SK-N-SH (cell line): ENCODE measurements at regions of chr18 and their contacts with region 1.

Region 1: GRCh38 chr18:12726774-12727550 is 24.1 kb downstream of the PSMG2 start:
- DNase-seq: peak; percentile 69
- H3K4me3 ChIP-seq: no peak overlapping the region; a peak in 1 of 4 replicates
- H3K27ac ChIP-seq: no peak overlapping the region
- H3K4me1 ChIP-seq: no peaks in the 10 kb centered on the region; a peak in 1 of 4 replicates
- H3K27me3 ChIP-seq: no peaks in the 10 kb centered on the region
- CTCF ChIP-seq: peak; percentile 89
- EP300 ChIP-seq: no peak
- RAD21 ChIP-seq: peak; percentile 89

Region 2: GRCh38 chr18:12106471-12106870 is 620.5 kb before region 1 on chr18:
- CTCF ChIA-PET with region 1: no interaction called
- POLR2A ChIA-PET with region 1: no interaction called
- DNase-seq: no peak
- H3K4me3 ChIP-seq: no peak overlapping the region
- H3K27ac ChIP-seq: no peak overlapping the region
- H3K4me1 ChIP-seq: no peaks in the 10 kb centered on the region; a peak in 1 of 4 replicates
- H3K27me3 ChIP-seq: no peaks in the 10 kb centered on the region; the same call in 1 of the 2 replicates
- CTCF ChIP-seq: no peak
- EP300 ChIP-seq: no peak
- RAD21 ChIP-seq: no peak

Region 3: DNA sequence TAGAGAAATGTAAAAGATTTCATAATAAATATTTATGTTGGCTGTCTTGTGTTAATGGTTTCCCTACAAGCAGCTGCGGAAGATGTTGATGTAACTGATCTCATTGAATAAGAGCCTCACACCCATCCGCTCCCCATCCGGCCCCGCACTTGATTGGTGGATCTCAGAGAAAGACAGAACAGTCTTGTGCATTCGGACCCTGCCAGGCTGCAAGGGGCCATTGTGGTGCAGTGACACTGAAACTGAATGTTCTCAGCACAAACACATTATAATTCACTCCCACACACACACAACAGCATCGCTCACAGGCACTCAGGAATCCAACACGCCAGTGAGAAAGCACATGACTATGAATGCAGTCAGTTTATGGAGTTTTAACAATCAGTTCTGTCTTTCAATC is 271.5 kb before region 1 on chr18:
- CTCF ChIA-PET with region 1: no interaction called
- POLR2A ChIA-PET with region 1: no interaction called
- DNase-seq: no peak
- H3K4me3 ChIP-seq: no peak overlapping the region
- H3K27ac ChIP-seq: no peak overlapping the region
- H3K4me1 ChIP-seq: peaks cover 0 to 3% of the 10 kb centered on the region in 2 experiments; a peak in 1 of 4 replicates
- H3K27me3 ChIP-seq: no peaks in the 10 kb centered on the region
- CTCF ChIP-seq: no peak
- EP300 ChIP-seq: no peak
- RAD21 ChIP-seq: no peak

Region 4: DNA sequence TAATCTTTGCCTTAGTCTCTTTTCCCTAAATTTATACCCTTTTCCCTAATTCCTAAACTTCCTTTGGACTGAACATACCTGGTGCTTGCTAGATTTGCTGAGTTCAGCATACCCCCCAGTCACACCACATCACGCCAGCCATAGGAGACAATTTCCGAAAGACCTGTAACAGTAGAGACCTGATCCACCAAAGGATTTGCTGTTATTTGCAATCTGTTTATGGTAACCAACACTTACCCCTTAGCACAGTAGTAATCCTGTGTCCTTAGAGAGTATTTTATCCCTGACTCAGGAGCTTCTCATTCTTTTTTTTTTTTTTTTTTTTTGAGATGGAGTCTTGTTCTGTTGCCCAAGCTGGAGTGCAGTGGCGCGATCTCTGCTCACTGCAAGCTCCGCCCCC is 15.5 kb before region 1 on chr18:
- CTCF ChIA-PET with region 1: interaction called, 10 read pairs
- POLR2A ChIA-PET with region 1: no interaction called
- DNase-seq: no peak
- H3K4me3 ChIP-seq: no peak overlapping the region
- H3K27ac ChIP-seq: no peak overlapping the region
- H3K4me1 ChIP-seq: no peaks in the 10 kb centered on the region
- H3K27me3 ChIP-seq: no peaks in the 10 kb centered on the region
- CTCF ChIP-seq: no peak
- EP300 ChIP-seq: no peak
- RAD21 ChIP-seq: no peak

Region 5: DNA sequence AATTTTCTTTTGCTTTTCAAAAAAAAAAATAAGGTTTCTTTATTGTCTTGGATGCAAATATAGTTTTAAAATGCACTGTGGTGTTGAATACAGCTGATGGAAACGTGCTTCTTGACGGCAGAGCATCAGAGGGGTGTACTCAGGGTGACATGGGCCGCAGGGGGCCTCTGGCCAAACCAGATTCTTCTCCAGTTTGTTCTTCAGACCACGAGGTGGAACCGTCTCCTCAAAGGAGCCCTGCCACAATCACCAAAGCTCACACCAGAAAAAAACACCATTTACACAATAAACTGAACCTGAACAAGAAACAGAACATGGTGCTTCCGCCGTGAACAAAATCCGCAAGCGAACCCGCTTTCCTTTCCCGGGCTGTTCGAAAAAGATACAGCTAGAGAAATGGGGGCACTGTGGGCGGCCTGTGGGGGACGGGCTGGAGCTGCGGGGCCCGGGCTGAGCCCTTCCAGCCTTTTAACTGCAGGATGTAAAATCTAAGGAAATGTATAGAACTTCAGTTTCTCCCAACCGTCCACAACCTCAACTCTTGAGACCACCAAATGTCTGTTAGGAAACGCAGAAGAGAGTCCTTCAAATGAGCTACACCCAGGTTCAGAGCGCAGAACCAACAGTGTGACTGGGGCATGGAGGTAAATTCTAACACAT is 10.4 kb after region 1 on chr18:
- CTCF ChIA-PET with region 1: interaction called, 60 read pairs
- POLR2A ChIA-PET with region 1: no interaction called
- DNase-seq: no peak
- H3K4me3 ChIP-seq: no peak overlapping the region
- H3K27ac ChIP-seq: no peak overlapping the region
- H3K4me1 ChIP-seq: no peaks in the 10 kb centered on the region; a peak in 1 of 4 replicates
- H3K27me3 ChIP-seq: no peaks in the 10 kb centered on the region
- CTCF ChIP-seq: no peak
- EP300 ChIP-seq: no peak
- RAD21 ChIP-seq: peak; percentile 8; the same call in 1 of the 2 replicates

Region 6: GRCh38 chr18:12744103-12744502 is 17.1 kb after region 1 on chr18:
- CTCF ChIA-PET with region 1: interaction called, 60 read pairs
- POLR2A ChIA-PET with region 1: interaction called, 4 read pairs
- DNase-seq: peak; percentile 66
- H3K4me3 ChIP-seq: no peak overlapping the region
- H3K27ac ChIP-seq: no peak overlapping the region
- H3K4me1 ChIP-seq: no peaks in the 10 kb centered on the region; a peak in 2 of 4 replicates
- H3K27me3 ChIP-seq: no peaks in the 10 kb centered on the region
- CTCF ChIP-seq: peak; percentile 77
- EP300 ChIP-seq: no peak
- RAD21 ChIP-seq: peak; percentile 84

Region 7: DNA sequence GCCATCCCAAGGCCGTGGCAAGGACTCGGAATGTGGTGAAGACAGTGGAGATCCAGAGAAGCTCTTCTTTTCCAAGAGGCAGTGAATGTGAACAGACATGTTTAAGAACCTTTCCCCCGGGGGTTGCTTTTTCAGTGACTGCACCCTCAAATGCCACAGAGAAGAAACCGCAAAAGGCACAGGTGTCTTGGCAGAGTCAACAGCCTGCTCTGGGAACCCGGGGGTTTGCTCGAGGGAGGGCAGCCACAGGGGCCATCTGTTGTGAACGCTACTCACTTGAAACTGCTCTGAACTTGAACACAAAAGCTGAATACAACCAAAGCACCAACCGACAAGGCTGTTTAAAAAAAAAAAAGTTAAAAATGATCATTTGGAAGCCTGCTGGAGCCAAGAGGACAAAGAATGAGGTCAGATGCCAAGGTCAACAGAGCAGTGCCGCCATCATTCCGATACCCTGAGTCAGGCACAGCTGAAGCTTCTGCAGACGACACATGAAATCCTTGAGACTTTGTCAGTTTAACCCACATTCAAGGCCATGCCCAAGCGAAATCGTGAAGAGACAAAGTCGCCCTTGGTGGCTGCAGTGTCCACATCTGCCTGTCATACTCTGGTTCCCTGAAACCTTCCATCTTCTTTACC is 23.2 kb after region 1 on chr18:
- CTCF ChIA-PET with region 1: interaction called, 60 read pairs
- POLR2A ChIA-PET with region 1: interaction called, 4 read pairs
- DNase-seq: no peak
- H3K4me3 ChIP-seq: no peak overlapping the region
- H3K27ac ChIP-seq: no peak overlapping the region
- H3K4me1 ChIP-seq: peaks cover 0 to 7% of the 10 kb centered on the region in 2 experiments; a peak in 2 of 4 replicates
- H3K27me3 ChIP-seq: no peaks in the 10 kb centered on the region
- CTCF ChIP-seq: no peak
- EP300 ChIP-seq: no peak
- RAD21 ChIP-seq: no peak